ENCODE measurements at regions of chr5 and their contacts with region 1.

Region 1: GRCh38 chr5:93607367-93608258 is 24.6 kb downstream of the NR2F1 start:
- DNase-seq: peak; percentile 64
- H3K4me3 ChIP-seq: peak overlapping the region in 1 of 2 experiments; percentile 26; a peak in 2 of 4 replicates
- H3K27ac ChIP-seq: peak overlapping the region in 1 of 2 experiments; percentile 48; a peak in 2 of 4 replicates
- H3K4me1 ChIP-seq: peaks cover 0 to 14% of the 10 kb centered on the region in 2 experiments; a peak in 3 of 4 replicates
- H3K27me3 ChIP-seq: peaks cover 6% of the 10 kb centered on the region
- CTCF ChIP-seq: peak; percentile 71
- EP300 ChIP-seq: no peak
- RAD21 ChIP-seq: peak; percentile 85

Region 2: GRCh38 chr5:93582677-93583438 is 24.8 kb before region 1 on chr5 and contains the start of gene NR2F1:
- CTCF ChIA-PET with region 1: interaction called, 32 read pairs
- POLR2A ChIA-PET with region 1: interaction called, 4 read pairs
- DNase-seq: peak; percentile 80
- H3K4me3 ChIP-seq: peak within 1 kb of the TSS; percentile 74 to 87
- H3K27ac ChIP-seq: peak within 1 kb of the TSS; percentile 92
- H3K4me1 ChIP-seq: peaks cover 5 to 6% of the 10 kb centered on the region in 2 experiments; a peak in 3 of 4 replicates
- H3K27me3 ChIP-seq: no peaks in the 10 kb centered on the region
- CTCF ChIP-seq: peak; percentile 27; the same call in 1 of the 2 replicates
- EP300 ChIP-seq: peak; percentile 49 to 66; a peak in 3 of 4 replicates
- RAD21 ChIP-seq: no peak; the same call in 1 of the 2 replicates
- polyA plus RNA-seq, gene NR2F1: 40.0 and 47.1 TPM in 2 replicates

Region 3: GRCh38 chr5:93620487-93621326 is 13.1 kb after region 1 on chr5:
- CTCF ChIA-PET with region 1: interaction called, 34 read pairs
- POLR2A ChIA-PET with region 1: no interaction called
- DNase-seq: peak; percentile 94
- H3K4me3 ChIP-seq: peak overlapping the region; percentile 71 to 85
- H3K27ac ChIP-seq: peak overlapping the region; percentile 86 to 97
- H3K4me1 ChIP-seq: peaks cover 0 to 4% of the 10 kb centered on the region in 2 experiments; a peak in 2 of 4 replicates
- H3K27me3 ChIP-seq: no peaks in the 10 kb centered on the region
- CTCF ChIP-seq: peak; percentile 22
- EP300 ChIP-seq: 0 out of 4 replicates have a peak, but pooled peaks of 1 of the 2 experiments have one; percentile 21
- RAD21 ChIP-seq: peak; percentile 60

Region 4: GRCh38 chr5:93899026-93899600 is 291.5 kb after region 1 on chr5:
- CTCF ChIA-PET with region 1: interaction called, 11 read pairs
- POLR2A ChIA-PET with region 1: interaction called, 4 read pairs
- DNase-seq: peak; percentile 11
- H3K4me3 ChIP-seq: no peak overlapping the region
- H3K27ac ChIP-seq: no peak overlapping the region
- H3K4me1 ChIP-seq: peaks cover 0 to 4% of the 10 kb centered on the region in 2 experiments; a peak in 2 of 4 replicates
- H3K27me3 ChIP-seq: no peaks in the 10 kb centered on the region
- CTCF ChIP-seq: peak; percentile 65
- EP300 ChIP-seq: no peak; a peak in 1 of 4 replicates
- RAD21 ChIP-seq: peak; percentile 44

Region 5: DNA sequence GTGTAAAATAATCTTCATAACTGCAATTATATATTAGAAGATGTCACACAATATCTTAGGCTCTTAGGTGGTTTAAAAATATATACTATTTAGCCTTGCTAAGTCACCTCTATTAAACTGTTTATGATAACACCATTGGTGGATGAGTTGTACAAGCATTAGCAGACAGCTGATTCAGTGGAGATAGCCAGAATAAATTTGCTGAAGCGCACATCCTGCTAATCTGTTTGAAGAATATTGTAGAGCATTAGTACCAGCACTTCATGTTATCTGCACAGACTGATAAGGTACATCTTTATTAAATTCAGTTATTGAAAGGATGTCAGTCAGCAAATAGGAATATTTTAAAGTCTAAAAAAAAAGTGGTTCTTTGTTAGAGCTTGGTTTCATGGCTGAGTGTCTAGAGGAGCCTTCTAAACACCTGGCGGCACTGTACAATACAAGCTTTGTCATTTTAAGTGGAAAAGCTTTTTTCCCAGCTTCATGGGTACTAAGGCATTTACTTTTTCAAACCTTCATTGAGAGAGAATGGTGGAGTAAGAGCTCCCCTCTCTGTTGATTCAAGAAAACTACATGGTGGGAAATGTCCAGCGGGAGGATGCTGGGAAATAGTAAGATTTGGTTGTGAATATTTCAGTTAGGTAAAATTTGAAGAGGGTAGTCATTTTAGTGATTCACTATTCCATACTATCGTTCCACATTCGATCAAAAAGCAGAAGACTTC is 1286.0 kb after region 1 on chr5:
- CTCF ChIA-PET with region 1: interaction called, 11 read pairs
- POLR2A ChIA-PET with region 1: no interaction called
- DNase-seq: peak; percentile 47
- H3K4me3 ChIP-seq: no peak overlapping the region
- H3K27ac ChIP-seq: peak overlapping the region in 1 of 2 experiments; percentile 75; a peak in 2 of 4 replicates
- H3K4me1 ChIP-seq: peaks cover 0 to 8% of the 10 kb centered on the region in 2 experiments; a peak in 2 of 4 replicates
- H3K27me3 ChIP-seq: no peaks in the 10 kb centered on the region
- CTCF ChIP-seq: peak; percentile 55
- EP300 ChIP-seq: peak in 1 of 2 experiments; percentile 46; a peak in 1 of 4 replicates
- RAD21 ChIP-seq: peak; percentile 94

Measured in SK-N-SH (cell line).